ENCODE measurements at regions of chr4 and their contacts with region 1.

Region 1: DNA sequence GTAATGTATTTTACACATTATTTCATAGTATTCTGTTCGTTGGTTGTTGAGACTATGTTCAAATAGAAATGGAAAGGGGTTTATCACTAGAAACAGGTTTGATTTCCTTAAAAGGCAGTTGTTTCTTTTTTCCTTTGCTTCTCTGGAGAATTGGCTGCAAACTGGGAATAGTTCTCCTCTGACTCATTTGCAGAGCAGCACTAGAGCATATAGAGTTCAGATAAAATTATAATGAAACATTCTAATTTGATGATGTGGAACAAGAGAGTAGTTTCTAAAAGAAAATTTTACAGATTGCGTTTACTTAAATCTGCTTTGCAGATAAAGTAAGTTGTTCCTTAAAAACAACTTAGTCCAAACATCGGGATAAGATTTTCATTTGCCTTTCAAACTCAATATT is 29.7 kb downstream of the SYNPO2 start:
- DNase-seq: peak; percentile 90
- H3K4me3 ChIP-seq: no peak overlapping the region
- H3K27ac ChIP-seq: peak overlapping the region; percentile 71
- H3K4me1 ChIP-seq: peaks cover 17% of the 10 kb centered on the region
- H3K27me3 ChIP-seq: no peaks in the 10 kb centered on the region
- CTCF ChIP-seq: no peak
- POLR2A ChIP-seq: no peak

Region 2: DNA sequence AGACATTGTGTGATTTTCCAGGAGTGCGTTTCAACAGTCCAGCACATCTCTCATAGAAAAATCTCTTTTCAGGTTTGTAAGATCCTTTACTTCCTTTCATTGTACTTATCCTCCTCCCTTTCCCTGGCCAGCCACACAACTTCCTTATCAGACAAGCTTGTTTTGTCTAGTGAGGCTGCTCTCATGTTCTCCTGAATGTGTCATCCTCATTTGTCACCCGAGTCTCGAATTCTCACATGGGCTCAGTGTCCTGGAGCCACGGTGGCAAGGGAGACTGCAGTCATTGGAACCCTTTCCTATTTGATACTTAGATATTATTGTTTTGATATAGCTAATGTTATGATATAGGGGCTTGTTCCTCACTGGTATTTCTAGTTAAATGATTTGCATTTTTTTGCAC is 12.8 kb before region 1 on chr4:
- CTCF ChIA-PET with region 1: interaction called, 7 read pairs
- POLR2A ChIA-PET with region 1: no interaction called
- dilution Hi-C with region 1: no loop called
- intact Hi-C with region 1: loop called (anchors 1 kb)
- DNase-seq: peak; percentile 77
- H3K4me3 ChIP-seq: no peak overlapping the region
- H3K27ac ChIP-seq: peak overlapping the region; percentile 49
- H3K4me1 ChIP-seq: peaks cover 13% of the 10 kb centered on the region
- H3K27me3 ChIP-seq: no peaks in the 10 kb centered on the region
- CTCF ChIP-seq: no peak
- POLR2A ChIP-seq: no peak

Region 3: DNA sequence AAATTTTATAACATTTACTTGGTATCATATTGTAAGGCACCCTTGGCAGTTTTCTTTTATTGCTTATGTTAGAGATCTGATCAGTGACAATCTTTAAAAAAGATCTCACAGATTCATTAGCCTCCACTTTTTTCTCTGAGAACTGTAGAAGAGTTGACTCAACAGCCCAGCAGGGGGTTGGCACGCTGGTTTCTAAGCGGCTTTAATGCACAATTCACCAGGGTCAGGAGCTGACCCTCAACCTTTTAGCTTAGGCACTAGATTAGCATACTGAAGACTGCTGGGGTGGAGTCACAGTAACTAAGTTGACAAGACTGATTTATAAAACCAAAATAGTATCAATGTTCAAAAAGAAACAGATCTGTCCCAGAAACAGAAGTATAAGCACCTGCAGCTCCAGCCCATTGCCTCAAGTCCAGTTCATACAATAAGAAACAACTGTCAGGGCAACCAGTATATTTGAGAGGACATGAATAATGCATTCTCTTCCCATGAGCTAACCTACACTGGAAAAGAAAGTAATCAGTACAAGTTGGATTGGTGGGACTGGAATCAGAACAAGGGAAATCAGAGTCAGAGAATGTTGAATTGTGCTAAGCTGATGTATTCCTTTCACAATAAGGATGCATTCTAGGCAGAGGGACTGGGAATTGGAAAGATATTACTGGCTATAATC is 632.6 kb after region 1 on chr4:
- CTCF ChIA-PET with region 1: no interaction called
- POLR2A ChIA-PET with region 1: no interaction called
- dilution Hi-C with region 1: no loop called
- intact Hi-C with region 1: no loop called
- DNase-seq: no peak
- H3K4me3 ChIP-seq: no peak overlapping the region
- H3K27ac ChIP-seq: no peak overlapping the region
- H3K4me1 ChIP-seq: no peaks in the 10 kb centered on the region
- H3K27me3 ChIP-seq: no peaks in the 10 kb centered on the region
- CTCF ChIP-seq: no peak
- POLR2A ChIP-seq: no peak